Left ventricle myocardium superior (tissue), 1 donor: ENCODE measurements at regions of chr5 and their contacts with region 1.

Region 1: DNA sequence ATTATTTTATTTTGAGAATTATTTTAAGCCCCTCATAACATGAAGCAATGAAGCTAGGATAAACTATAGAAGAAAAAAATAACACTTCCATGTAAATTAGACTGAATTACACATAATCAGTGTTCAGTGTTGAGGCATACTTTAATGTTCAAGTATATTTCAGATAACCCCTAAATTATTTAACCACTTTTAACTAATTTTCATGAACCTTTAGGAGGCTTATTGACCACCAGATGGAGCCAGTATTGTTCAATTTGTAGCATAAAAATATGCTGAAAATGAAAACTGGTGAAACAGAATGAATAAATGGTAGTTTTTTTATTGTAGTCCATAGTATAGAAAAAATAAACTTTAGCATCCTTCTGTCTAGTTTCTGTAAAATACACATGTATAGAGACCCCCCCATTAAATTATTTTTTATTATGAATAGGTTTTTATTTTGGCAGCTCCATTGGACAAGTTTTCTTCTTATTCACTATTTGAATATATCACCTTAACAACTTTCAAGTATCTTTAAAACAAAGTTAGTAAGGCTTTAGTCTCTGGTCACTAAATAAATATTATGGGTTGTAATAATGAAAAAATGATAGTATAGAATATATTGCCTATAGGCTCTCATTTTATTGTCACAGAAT is 190.1 kb downstream of the CWC27 start:
- DNase-seq: no peak
- ATAC-seq: no peak

Region 2: DNA sequence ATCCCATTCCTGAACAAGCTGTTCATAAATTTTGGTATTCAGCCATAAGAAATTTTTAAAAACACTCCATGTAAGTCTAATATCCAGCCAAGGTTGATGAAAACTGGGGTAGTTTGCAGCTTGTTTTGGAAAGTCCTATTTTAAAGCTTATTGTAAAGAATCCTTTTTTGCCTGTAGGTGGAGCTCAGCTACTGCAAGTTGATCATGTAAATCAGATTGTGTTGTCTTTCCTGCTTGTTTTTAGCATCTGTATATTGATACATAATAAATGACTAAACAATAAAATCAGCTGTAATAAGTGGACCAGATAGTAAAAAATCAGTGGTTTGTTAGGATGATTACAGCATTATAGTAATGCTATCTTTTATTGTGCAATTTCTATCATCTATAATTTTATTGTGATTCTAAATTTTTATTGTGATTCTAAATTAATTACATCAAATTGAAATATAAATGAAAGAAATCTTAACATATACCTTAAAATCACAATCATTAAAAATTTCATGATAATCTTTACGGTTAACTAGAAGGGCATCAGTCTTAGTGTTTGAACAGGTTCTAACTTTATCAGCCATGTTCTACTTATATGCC is 147.7 kb before region 1 on chr5:
- intact Hi-C with region 1: loop called (anchors 5 kb)
- DNase-seq: no peak
- ATAC-seq: peak; percentile 41

Region 3: GRCh38 chr5:65102828-65103711 is 144.2 kb after region 1 on chr5:
- intact Hi-C with region 1: loop called (anchors 5 kb)
- DNase-seq: peak; percentile 81
- ATAC-seq: peak; percentile 94

Region 4: GRCh38 chr5:65481635-65482295 is 522.9 kb after region 1 on chr5 and contains the start of gene ADAMTS6:
- intact Hi-C with region 1: loop called (anchors 10 kb)
- DNase-seq: peak; percentile 92
- ATAC-seq: peak; percentile 95
- total RNA-seq, gene ADAMTS6: 1.4 TPM

Region 5: DNA sequence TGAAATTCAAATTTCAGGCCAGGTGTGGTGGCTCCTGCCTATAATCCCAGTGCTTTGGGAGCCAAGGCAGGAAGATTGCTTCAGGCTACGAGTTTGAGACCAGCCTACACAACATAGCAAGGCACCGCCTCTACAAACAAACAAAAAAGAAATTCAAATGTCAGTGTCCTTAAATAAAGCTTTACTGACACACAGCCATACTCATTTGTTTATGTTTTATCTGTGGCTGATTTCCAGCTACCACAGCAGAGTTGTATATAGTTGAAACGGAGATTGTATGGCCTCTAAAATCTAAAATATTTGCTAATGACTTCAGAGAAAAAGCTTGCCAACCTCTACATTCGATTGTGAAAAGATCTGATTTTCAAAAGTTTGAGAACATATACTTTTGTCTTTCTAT is 681.4 kb after region 1 on chr5:
- intact Hi-C with region 1: no loop called
- DNase-seq: no peak
- ATAC-seq: no peak